ENCODE measurements at regions of chr1 and their contacts with region 1.

Region 1: DNA sequence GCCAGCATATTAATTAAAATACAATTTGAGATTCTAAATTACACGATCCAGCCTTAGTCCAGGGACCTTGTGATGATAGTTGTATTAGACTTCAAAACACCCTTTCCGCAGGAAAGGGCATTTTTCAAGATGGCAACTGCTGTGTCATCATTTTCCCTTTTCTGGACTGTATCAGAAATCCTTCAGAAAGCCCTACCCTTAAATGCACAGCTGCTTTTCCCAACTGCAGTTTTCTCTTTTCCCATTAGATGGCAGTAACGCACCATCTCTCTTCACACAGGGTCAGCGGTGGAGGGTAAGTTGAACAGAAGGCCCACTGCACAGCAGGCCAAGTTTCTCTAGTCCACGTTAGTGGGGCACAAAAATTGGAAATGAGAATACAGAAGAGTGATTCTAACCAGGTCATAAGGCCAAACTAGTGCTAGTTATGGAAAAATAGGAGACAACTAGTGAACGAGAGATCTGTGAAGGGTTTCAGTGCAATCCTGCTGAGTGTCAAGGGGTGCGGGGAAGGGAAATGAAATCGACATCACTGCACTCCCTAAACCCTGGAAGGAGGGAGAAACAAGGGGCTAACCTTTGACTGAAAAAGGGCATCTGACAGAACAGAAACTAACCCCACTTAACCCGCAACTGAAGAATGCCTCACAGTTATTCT is 22.1 kb upstream of the TDRD10 start:
- DNase-seq: peak in 13 of 14 experiments; percentile 23 to 84 (median 43)
- ATAC-seq: peak; percentile 91
- H3K4me3 ChIP-seq: no peak overlapping the region
- H3K4me3 Mint-ChIP-seq: no peak overlapping the region
- H3K27ac ChIP-seq: no peak overlapping the region
- H3K27ac Mint-ChIP-seq: no peak overlapping the region
- H3K4me1 ChIP-seq: peaks cover 7% of the 10 kb centered on the region
- H3K4me1 Mint-ChIP-seq: peaks cover 20% of the 10 kb centered on the region
- H3K27me3 ChIP-seq: no peaks in the 10 kb centered on the region
- H3K27me3 Mint-ChIP-seq: no peaks in the 10 kb centered on the region
- CTCF ChIP-seq: peak; percentile 90

Region 2: DNA sequence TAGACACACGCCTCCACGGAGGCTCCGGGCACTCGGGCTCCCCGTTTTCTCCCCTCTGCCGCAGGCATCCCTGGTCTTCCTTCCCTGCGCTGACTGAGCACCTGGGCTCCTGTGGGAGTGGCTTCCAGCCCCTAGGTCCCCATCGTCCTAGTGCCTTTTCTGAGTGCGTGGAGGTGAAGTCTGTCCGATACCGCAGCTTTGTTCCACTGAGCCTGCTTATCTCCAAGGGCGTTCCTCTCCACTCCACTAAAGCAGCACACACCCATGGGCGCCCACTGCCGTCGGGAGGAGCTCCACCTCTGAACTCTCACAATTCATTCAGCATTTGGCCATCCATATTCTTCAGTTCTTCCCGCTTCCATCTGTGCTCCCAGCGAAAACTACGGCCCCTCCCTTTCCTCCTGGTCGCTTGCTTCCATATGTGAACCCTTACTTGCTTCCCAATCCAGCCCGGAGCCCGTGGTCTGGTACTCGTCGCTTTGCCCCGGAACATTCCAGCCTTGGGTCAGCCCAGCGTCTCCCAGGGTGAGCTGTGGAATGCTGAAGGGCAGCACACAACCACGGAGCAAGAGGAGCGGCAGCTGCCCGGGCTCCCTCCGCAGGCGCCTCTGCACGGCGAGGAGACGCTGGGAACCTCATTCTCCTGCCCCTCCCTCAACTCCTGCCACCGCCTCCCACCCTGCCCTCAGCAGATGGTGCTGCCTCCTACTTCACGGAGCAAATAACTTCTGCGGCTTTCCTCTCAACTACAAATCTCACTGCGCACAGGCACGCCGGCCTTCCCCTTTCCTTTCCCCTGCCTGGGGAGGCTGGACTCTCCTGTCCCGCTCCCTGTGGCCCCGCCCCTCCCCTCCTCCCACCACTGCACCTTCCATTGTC is 127.1 kb before region 1 on chr1:
- CTCF ChIA-PET with region 1: interaction called, 3 read pairs
- POLR2A ChIA-PET with region 1: interaction called, 4 read pairs
- intact Hi-C with region 1: loop called (anchors 1 kb)
- DNase-seq: peak in 11 of 14 experiments; percentile 22 to 80 (median 53)
- ATAC-seq: peak; percentile 82
- H3K4me3 ChIP-seq: peak overlapping the region; percentile 64
- H3K4me3 Mint-ChIP-seq: peak overlapping the region; percentile 92
- H3K27ac ChIP-seq: peak overlapping the region; percentile 40 to 55
- H3K27ac Mint-ChIP-seq: peak overlapping the region; percentile 75
- H3K4me1 ChIP-seq: peaks cover 45% of the 10 kb centered on the region
- H3K4me1 Mint-ChIP-seq: peaks cover 54% of the 10 kb centered on the region
- H3K27me3 ChIP-seq: no peaks in the 10 kb centered on the region
- H3K27me3 Mint-ChIP-seq: no peaks in the 10 kb centered on the region
- CTCF ChIP-seq: peak; percentile 10

Region 3: DNA sequence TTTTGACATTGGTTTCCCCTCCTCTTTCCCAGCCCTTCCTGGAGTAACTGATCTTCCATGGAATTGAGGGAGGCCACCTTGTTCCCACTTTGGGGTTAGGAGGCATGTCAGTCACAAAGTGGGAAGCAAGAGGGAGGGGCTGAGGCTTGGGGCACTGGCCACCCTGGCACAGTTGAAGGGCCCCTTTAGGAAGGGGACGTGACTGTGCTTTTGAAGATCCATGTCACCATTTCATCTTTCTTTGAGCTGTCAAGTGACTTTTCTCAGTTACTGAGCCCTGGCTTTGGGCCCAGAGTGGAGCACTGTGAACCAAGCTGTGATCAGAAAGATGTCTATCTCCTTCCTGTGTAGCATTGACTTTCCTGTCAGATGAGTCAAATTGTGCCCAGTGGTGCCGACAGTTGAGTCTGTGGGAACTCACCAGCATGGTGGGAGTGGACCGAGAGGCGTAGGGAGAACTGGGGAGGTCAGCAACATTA is 16.3 kb before region 1 on chr1:
- CTCF ChIA-PET with region 1: interaction called, 21 read pairs
- POLR2A ChIA-PET with region 1: interaction called, 9 read pairs
- intact Hi-C with region 1: no loop called
- DNase-seq: peak; percentile 47 to 87 (median 70)
- ATAC-seq: peak; percentile 71
- H3K4me3 ChIP-seq: no peak overlapping the region
- H3K4me3 Mint-ChIP-seq: peak overlapping the region; percentile 87
- H3K27ac ChIP-seq: peak overlapping the region; percentile 40 to 59
- H3K27ac Mint-ChIP-seq: peak overlapping the region; percentile 93
- H3K4me1 ChIP-seq: peaks cover 95% of the 10 kb centered on the region
- H3K4me1 Mint-ChIP-seq: peaks cover 82% of the 10 kb centered on the region
- H3K27me3 ChIP-seq: no peaks in the 10 kb centered on the region
- H3K27me3 Mint-ChIP-seq: no peaks in the 10 kb centered on the region
- CTCF ChIP-seq: no peak

Region 4: DNA sequence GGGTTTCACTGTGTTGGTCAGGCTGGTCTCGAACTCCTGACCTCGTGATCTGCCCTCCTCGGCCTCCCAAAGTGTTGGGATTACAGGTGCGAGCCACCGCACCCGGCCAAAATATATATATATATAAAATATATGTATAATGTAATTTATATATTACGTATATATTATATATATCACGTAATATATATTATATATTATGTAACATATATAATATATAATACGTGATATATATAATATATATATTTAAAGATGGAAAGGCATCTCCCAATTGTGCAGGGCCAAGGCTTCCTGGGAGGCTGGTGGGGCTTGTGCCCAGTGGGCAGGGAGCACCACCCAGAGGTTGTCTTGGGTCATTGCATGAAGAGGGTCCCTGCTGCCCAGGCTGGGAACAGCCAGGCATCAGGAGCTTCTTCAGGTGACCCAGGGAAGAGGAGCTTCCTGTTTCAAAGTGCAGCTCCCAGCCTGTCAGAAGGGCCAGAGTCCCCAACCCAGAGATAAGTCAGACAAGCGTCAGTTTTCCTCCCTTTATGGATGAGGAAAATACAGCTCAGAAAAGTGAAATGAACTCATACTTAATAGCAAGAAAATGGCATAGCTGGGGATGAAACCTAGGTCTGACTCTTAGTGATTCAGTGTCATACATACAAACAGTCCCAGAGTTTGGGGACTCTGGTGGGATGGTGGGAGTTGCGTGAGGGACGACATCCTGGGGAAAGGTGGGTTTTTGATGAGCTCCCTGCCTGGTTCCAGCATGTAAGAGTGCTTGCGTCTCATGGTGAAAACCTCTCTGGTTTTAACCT is 66.6 kb after region 1 on chr1:
- CTCF ChIA-PET with region 1: interaction called, 43 read pairs
- POLR2A ChIA-PET with region 1: interaction called, 3 read pairs
- intact Hi-C with region 1: loop called (anchors 1 kb)
- DNase-seq: peak; percentile 28 to 77 (median 38)
- ATAC-seq: peak; percentile 93
- H3K4me3 ChIP-seq: no peak overlapping the region
- H3K4me3 Mint-ChIP-seq: no peak overlapping the region
- H3K27ac ChIP-seq: no peak overlapping the region
- H3K27ac Mint-ChIP-seq: no peak overlapping the region
- H3K4me1 ChIP-seq: no peaks in the 10 kb centered on the region
- H3K4me1 Mint-ChIP-seq: peaks cover 4% of the 10 kb centered on the region
- H3K27me3 ChIP-seq: no peaks in the 10 kb centered on the region
- H3K27me3 Mint-ChIP-seq: no peaks in the 10 kb centered on the region
- CTCF ChIP-seq: peak; percentile 68

Region 5: GRCh38 chr1:154878371-154879022 is 398.6 kb after region 1 on chr1:
- CTCF ChIA-PET with region 1: interaction called, 6 read pairs
- POLR2A ChIA-PET with region 1: no interaction called
- intact Hi-C with region 1: loop called (anchors 1 to 5 kb)
- DNase-seq: peak; percentile 54 to 82 (median 64)
- ATAC-seq: peak; percentile 91
- H3K4me3 ChIP-seq: no peak overlapping the region
- H3K4me3 Mint-ChIP-seq: no peak overlapping the region
- H3K27ac ChIP-seq: no peak overlapping the region
- H3K27ac Mint-ChIP-seq: no peak overlapping the region
- H3K4me1 ChIP-seq: no peaks in the 10 kb centered on the region
- H3K4me1 Mint-ChIP-seq: no peaks in the 10 kb centered on the region
- H3K27me3 ChIP-seq: no peaks in the 10 kb centered on the region
- H3K27me3 Mint-ChIP-seq: peaks cover 5% of the 10 kb centered on the region
- CTCF ChIP-seq: peak; percentile 91

Measured in CD4-positive, alpha-beta T cell (primary cell).